Activated CD4-positive, alpha-beta T cell treated with anti-CD3 and anti-CD28 coated beads for 36 hours (primary cell): ENCODE measurements at regions of chr10 and their contacts with region 1.

Region 1: DNA sequence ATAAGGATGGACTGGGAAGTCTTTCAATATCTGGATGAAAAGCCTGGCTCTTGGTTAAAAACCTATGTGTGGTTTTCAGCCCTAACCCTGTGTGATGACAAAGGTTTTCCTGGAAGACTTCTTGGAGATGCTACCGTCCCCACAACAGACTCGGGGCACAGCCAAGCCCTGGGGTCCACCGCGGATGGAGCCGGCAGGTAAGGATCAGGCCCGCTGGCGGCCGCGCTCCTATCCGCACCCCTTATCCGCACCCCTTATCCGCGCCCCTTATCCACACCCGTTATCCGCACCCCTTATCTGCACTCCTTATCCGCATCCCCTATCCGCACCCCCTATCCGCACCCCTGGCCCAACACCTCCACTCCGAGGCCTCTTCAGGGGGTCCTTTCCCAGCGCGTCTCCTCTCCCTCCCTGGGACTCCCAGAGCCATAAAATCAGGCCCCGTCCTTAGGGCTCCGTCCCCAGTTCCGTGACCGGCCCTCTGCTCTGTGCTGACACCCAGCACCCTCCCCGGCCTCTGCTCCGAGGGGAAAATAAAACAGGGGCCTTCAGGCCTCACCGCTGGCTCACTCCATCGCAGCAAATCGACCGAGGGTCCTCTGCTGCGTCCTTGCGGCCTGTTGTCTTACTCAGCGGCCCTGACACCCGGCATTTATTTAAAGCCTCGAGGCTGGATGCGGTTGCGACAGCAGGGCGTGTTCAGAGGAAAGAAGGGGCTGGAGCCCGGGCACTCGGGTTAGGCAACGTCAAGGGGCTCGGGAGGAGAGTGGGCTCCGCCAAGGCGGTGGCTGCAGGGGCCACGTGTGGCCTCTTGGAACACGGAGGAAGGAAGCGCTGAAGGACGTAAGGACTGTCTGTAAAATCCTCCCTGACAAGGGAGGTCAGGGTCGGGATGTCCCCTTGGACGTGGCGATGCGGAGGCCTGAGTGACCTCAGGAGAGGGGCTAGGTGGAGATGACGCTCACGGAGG is 215.1 kb upstream of the ADARB2 start:
- DNase-seq: no peak
- ATAC-seq: no peak
- H3K4me3 Mint-ChIP-seq: no peak overlapping the region
- H3K27ac Mint-ChIP-seq: no peak overlapping the region
- H3K4me1 Mint-ChIP-seq: peaks cover 12% of the 10 kb centered on the region
- H3K27me3 Mint-ChIP-seq: no peaks in the 10 kb centered on the region

Region 2: DNA sequence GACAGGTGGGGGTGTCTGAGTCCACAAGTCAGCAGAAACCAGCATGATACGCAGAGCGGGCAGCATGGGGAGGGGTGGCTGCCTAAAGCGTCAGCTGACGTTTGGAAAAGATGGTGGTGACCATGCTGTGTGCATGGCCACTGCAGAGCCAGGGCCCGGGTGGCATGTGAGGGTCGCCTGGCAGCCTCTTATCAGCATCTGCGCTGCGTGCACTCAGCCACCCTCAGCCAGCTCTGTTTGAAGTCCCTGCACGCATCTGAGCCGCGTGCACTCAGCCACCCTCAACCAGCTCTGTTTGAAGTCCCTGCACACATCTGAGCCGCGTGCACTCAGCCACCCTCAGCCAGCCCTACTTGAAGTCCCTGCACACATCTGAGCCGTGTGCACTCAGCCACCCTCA is 834.8 kb before region 1 on chr10:
- CTCF ChIA-PET with region 1: no interaction called
- POLR2A ChIA-PET with region 1: interaction called, 10 read pairs
- intact Hi-C with region 1: no loop called
- DNase-seq: no peak
- ATAC-seq: no peak
- H3K4me3 Mint-ChIP-seq: no peak overlapping the region
- H3K27ac Mint-ChIP-seq: no peak overlapping the region
- H3K4me1 Mint-ChIP-seq: peaks cover 35% of the 10 kb centered on the region
- H3K27me3 Mint-ChIP-seq: no peaks in the 10 kb centered on the region